ENCODE measurements at regions of chr11 and their contacts with region 1.

Region 1: GRCh38 chr11:63567044-63567840 is 4.1 kb upstream of the PLAAT2 start:
- DNase-seq: peak; percentile 75 to 92
- ATAC-seq: peak; percentile 80 to 91 (median 84)
- H3K4me3 ChIP-seq: no peak overlapping the region
- H3K4me3 Mint-ChIP-seq: peak overlapping the region; percentile 61
- H3K27ac ChIP-seq: peak overlapping the region; percentile 95
- H3K27ac Mint-ChIP-seq: peak overlapping the region; percentile 93 to 96
- H3K4me1 ChIP-seq: peaks cover 43% of the 10 kb centered on the region
- H3K4me1 Mint-ChIP-seq: peaks cover 41 to 46% of the 10 kb centered on the region in 2 donors
- H3K27me3 ChIP-seq: no peaks in the 10 kb centered on the region
- H3K27me3 Mint-ChIP-seq: no peaks in the 10 kb centered on the region
- CTCF ChIP-seq: no peak

Region 2: GRCh38 chr11:63536669-63537292 is 30.5 kb before region 1 on chr11 and contains the start of gene PLAAT4:
- intact Hi-C with region 1: loop called (anchors 1 kb)
- DNase-seq: peak; percentile 52 to 77
- ATAC-seq: peak; percentile 59 to 71 (median 64)
- H3K4me3 ChIP-seq: peak within 1 kb of the TSS; percentile 75
- H3K4me3 Mint-ChIP-seq: peak within 1 kb of the TSS; percentile 96
- H3K27ac ChIP-seq: peak within 1 kb of the TSS; percentile 86
- H3K27ac Mint-ChIP-seq: peak within 1 kb of the TSS; percentile 93 to 97
- H3K4me1 ChIP-seq: peaks cover 76% of the 10 kb centered on the region
- H3K4me1 Mint-ChIP-seq: peaks cover 86 to 94% of the 10 kb centered on the region in 2 donors
- H3K27me3 ChIP-seq: no peaks in the 10 kb centered on the region
- H3K27me3 Mint-ChIP-seq: no peaks in the 10 kb centered on the region
- CTCF ChIP-seq: no peak
- total RNA-seq, gene PLAAT4: 204 to 215 (median 210) TPM

Region 3: GRCh38 chr11:63553741-63554151 is 13.5 kb before region 1 on chr11:
- intact Hi-C with region 1: loop called (anchors 1 kb)
- DNase-seq: peak; percentile 71 to 80
- ATAC-seq: peak; percentile 77 to 86 (median 86)
- H3K4me3 ChIP-seq: no peak overlapping the region
- H3K4me3 Mint-ChIP-seq: peak overlapping the region; percentile 85
- H3K27ac ChIP-seq: peak overlapping the region; percentile 93
- H3K27ac Mint-ChIP-seq: peak overlapping the region; percentile 97 to 98
- H3K4me1 ChIP-seq: peaks cover 48% of the 10 kb centered on the region
- H3K4me1 Mint-ChIP-seq: peaks cover 58 to 60% of the 10 kb centered on the region in 2 donors
- H3K27me3 ChIP-seq: no peaks in the 10 kb centered on the region
- H3K27me3 Mint-ChIP-seq: no peaks in the 10 kb centered on the region
- CTCF ChIP-seq: no peak

Region 4: DNA sequence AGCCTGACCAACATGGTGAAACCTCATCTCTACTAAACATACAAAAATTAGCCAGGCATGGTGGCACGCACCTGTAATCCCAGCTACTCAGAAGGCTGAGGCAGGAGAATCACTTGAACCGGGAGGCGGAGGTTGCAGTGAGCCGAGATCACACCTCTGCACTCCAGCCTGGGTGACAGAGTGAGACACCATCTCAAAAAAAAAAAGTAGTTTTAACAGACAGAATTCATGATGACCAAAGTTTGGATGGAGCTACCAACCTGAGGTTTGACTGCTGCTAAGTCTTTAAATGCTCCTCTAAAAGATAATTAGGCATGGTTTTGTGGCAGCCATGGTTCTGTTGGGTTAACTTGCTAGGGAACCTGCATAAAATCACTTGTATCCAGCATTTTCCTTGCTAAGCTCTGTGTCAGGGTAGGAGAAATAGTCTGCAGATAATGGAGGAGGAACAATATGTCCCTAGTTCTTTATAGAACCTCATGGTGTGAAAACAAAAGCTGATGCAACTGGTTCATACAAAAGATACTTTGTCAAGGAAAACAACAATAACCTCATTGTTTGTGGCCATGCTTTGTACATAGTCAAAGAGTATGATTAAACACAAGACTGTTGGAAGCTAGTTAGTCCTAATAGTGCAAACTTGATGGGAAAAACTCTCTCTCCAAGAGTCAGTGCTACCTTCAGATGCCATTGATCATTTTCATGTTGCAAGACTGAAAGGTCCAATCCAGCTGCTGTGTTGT is 15.9 kb after region 1 on chr11:
- intact Hi-C with region 1: loop called (anchors 1 kb)
- DNase-seq: no peak
- ATAC-seq: peak; percentile 49 to 60 (median 53)
- H3K4me3 ChIP-seq: no peak overlapping the region
- H3K4me3 Mint-ChIP-seq: peak overlapping the region; percentile 29
- H3K27ac ChIP-seq: peak overlapping the region; percentile 86
- H3K27ac Mint-ChIP-seq: peak overlapping the region; percentile 89 to 91
- H3K4me1 ChIP-seq: peaks cover 14% of the 10 kb centered on the region
- H3K4me1 Mint-ChIP-seq: peaks cover 27 to 32% of the 10 kb centered on the region in 2 donors
- H3K27me3 ChIP-seq: no peaks in the 10 kb centered on the region
- H3K27me3 Mint-ChIP-seq: no peaks in the 10 kb centered on the region
- CTCF ChIP-seq: no peak

Region 5: GRCh38 chr11:63635762-63636465 is 68.7 kb after region 1 on chr11:
- intact Hi-C with region 1: loop called (anchors 2 kb)
- DNase-seq: peak; percentile 59 to 86
- ATAC-seq: peak; percentile 81 to 98 (median 92)
- H3K4me3 ChIP-seq: no peak overlapping the region
- H3K4me3 Mint-ChIP-seq: no peak overlapping the region
- H3K27ac ChIP-seq: no peak overlapping the region
- H3K27ac Mint-ChIP-seq: peak overlapping the region in 1 of 2 donors; percentile 53
- H3K4me1 ChIP-seq: no peaks in the 10 kb centered on the region
- H3K4me1 Mint-ChIP-seq: peaks cover 0 to 12% of the 10 kb centered on the region in 2 donors
- H3K27me3 ChIP-seq: no peaks in the 10 kb centered on the region
- H3K27me3 Mint-ChIP-seq: no peaks in the 10 kb centered on the region
- CTCF ChIP-seq: peak; percentile 92

Region 6: GRCh38 chr11:63762654-63763495 is 195.6 kb after region 1 on chr11:
- intact Hi-C with region 1: no loop called
- DNase-seq: no peak
- ATAC-seq: no peak
- H3K4me3 ChIP-seq: no peak overlapping the region
- H3K4me3 Mint-ChIP-seq: no peak overlapping the region
- H3K27ac ChIP-seq: no peak overlapping the region
- H3K27ac Mint-ChIP-seq: no peak overlapping the region
- H3K4me1 ChIP-seq: peaks cover 11% of the 10 kb centered on the region
- H3K4me1 Mint-ChIP-seq: peaks cover 7 to 8% of the 10 kb centered on the region in 2 donors
- H3K27me3 ChIP-seq: no peaks in the 10 kb centered on the region
- H3K27me3 Mint-ChIP-seq: peaks cover 0 to 2% of the 10 kb centered on the region in 2 donors
- CTCF ChIP-seq: no peak

Region 7: DNA sequence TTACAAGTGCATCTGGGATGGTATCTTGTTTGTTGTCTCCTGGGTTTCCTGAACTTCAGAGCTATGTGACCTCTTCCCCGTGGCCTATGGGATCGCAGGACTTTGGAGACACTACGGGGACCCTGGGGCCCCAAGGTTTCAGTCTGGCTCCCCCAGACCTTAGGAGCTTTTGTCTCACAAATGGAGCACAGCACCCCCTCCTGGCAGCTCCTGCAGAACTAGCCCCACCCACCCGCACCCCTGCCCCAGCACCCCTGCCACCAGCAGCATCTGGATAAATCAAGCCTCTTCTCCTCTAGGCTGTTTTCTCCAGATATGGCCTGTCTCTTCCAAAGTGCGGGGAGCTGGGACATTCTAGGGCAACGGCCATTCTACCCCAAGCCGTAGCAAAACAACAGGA is 339.3 kb after region 1 on chr11:
- intact Hi-C with region 1: no loop called
- DNase-seq: peak; percentile 34 to 78
- ATAC-seq: peak in 2 of 3 donors; percentile 49 to 56
- H3K4me3 ChIP-seq: no peak overlapping the region
- H3K4me3 Mint-ChIP-seq: no peak overlapping the region
- H3K27ac ChIP-seq: no peak overlapping the region
- H3K27ac Mint-ChIP-seq: peak overlapping the region in 1 of 2 donors; percentile 20
- H3K4me1 ChIP-seq: no peaks in the 10 kb centered on the region
- H3K4me1 Mint-ChIP-seq: peaks cover 4 to 14% of the 10 kb centered on the region in 2 donors
- H3K27me3 ChIP-seq: no peaks in the 10 kb centered on the region
- H3K27me3 Mint-ChIP-seq: no peaks in the 10 kb centered on the region
- CTCF ChIP-seq: peak; percentile 28